Kidney (tissue), 22 donors: ENCODE measurements at regions of chr10 and their contacts with region 1.

Region 1: DNA sequence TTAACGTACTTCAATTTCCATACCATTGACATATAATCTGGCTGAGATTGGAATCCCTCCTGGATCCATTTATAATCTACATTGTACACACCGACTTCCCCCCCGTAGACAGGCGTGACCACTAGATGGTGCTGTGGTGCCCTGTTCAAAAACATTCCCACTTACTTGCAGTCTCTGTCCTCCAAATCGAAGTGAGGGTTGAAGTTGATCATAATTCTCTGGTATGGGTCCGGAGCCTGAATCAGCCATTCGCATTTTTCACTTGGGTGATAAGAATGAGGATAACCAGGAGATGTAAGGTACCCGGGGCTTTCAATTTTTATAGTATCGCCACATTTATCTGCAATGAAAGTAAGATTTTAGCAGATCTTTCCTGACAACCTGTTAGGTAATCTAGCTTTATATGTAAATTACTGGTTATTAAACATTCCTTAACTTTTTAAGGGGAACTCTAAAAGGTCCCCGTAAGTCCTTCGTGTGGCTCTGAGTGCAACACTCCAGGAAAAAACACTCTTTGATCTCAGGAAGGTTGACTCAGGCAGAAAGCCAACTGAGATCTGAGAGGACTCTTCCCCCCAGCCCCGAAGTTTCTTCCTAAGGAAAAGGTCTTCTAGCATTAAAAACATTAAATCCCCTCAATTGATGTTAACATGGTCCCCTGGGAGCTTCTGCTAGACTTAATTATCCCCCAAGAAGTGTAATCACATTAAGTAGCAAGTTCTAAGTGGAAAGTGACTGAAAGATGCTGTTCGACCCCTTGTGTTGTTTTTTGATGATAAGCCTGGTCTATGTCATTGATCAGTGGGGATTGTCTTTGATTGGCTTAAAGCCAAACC is 3.7 kb downstream of the NRP1 start:
- DNase-seq: peak; percentile 88 to 94 (median 91)
- H3K4me3 ChIP-seq: peak overlapping the region; percentile 77 to 95 (median 77)
- H3K27ac ChIP-seq: peak overlapping the region; percentile 26 to 79
- H3K4me1 ChIP-seq: peaks cover 4 to 16% (median 4%) of the 10 kb centered on the region in 3 donors
- H3K27me3 ChIP-seq: no peaks in the 10 kb centered on the region
- CTCF ChIP-seq: peak; percentile 90

Region 2: DNA sequence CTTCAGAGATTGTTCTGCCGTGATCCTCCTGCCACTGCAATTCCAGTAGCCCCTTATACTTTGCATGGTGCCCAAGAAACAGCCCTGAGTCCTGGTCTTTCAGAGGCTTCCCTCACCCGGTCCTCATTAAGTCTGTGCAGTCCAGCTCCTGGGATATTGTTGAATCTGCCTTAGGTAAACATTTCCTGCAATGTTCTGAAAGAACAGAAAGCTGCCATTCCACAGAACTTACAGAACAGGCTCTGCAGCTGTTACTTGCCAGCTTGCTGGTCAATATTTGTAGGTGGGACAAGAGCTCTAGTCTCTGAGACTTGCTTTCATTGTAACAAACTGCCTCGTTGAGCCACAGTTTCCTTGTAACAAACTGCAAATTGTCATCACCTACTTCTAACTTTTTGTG is 1159.6 kb before region 1 on chr10:
- intact Hi-C with region 1: no loop called
- DNase-seq: no peak
- H3K4me3 ChIP-seq: no peak overlapping the region
- H3K27ac ChIP-seq: no peak overlapping the region
- H3K4me1 ChIP-seq: no peaks in the 10 kb centered on the region
- H3K27me3 ChIP-seq: no peaks in the 10 kb centered on the region
- CTCF ChIP-seq: no peak

Region 3: GRCh38 chr10:33476757-33477273 is 146.1 kb after region 1 on chr10:
- intact Hi-C with region 1: no loop called
- DNase-seq: peak in 2 of 5 donors; percentile 19 to 49
- H3K4me3 ChIP-seq: no peak overlapping the region
- H3K27ac ChIP-seq: no peak overlapping the region
- H3K4me1 ChIP-seq: no peaks in the 10 kb centered on the region
- H3K27me3 ChIP-seq: no peaks in the 10 kb centered on the region
- CTCF ChIP-seq: no peak

Region 4: DNA sequence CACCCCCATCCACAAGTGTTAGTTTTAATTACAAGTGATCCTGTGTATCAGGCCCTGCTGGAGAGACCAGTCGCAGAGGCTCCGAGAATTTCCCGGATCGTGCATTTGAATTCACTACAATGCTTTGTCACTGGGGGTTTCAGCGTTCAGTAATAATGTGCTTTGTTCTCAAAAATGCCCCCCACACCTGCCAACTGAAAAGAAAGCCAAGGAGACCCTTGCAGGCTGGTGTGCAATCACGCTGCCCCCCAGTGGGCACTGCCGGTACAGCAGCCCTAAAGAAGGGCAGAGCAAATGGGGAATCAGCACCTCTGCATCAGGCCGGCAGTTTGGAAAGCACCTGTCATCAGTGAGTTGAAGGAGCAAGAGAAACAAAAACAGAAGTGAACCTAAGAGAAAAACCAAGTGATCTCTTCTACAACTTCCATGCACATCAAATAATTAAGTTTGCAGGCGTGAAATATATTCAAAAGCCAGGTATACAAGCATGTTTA is 1306.7 kb after region 1 on chr10:
- intact Hi-C with region 1: loop called (anchors 10 kb)
- DNase-seq: peak; percentile 75 to 86 (median 81)
- H3K4me3 ChIP-seq: no peak overlapping the region
- H3K27ac ChIP-seq: no peak overlapping the region
- H3K4me1 ChIP-seq: peaks cover 2 to 30% (median 8%) of the 10 kb centered on the region in 3 donors
- H3K27me3 ChIP-seq: no peaks in the 10 kb centered on the region
- CTCF ChIP-seq: peak; percentile 94